IMR-90 (cell line): ENCODE measurements at regions of chr9 and their contacts with region 1.

Region 1: GRCh38 chr9:130451509-130452388 is 7.0 kb downstream of the ASS1 start:
- DNase-seq: peak; percentile 95
- ATAC-seq: peak; percentile 86
- H3K4me3 ChIP-seq: no peak overlapping the region
- H3K27ac ChIP-seq: no peak overlapping the region
- H3K4me1 ChIP-seq: peaks cover 26% of the 10 kb centered on the region
- H3K27me3 ChIP-seq: no peaks in the 10 kb centered on the region; the same call in 1 of the 2 replicates
- CTCF ChIP-seq: peak; percentile 45
- POLR2A ChIP-seq: no peak
- RAD21 ChIP-seq: peak; percentile 20; the same call in 1 of the 2 replicates

Region 2: GRCh38 chr9:130423272-130423671 is 28.5 kb before region 1 on chr9:
- CTCF ChIA-PET with region 1: no interaction called
- POLR2A ChIA-PET with region 1: interaction called, 11 read pairs
- dilution Hi-C with region 1: no loop called
- in situ Hi-C with region 1: no loop called
- intact Hi-C with region 1: no loop called
- DNase-seq: no peak
- ATAC-seq: no peak
- H3K4me3 ChIP-seq: no peak overlapping the region
- H3K27ac ChIP-seq: no peak overlapping the region
- H3K4me1 ChIP-seq: peaks cover 15% of the 10 kb centered on the region
- H3K27me3 ChIP-seq: peaks cover 6% of the 10 kb centered on the region
- CTCF ChIP-seq: no peak
- POLR2A ChIP-seq: no peak
- RAD21 ChIP-seq: no peak

Region 3: GRCh38 chr9:130693426-130694191 is 241.9 kb after region 1 on chr9 and contains the start of gene EXOSC2:
- CTCF ChIA-PET with region 1: no interaction called
- POLR2A ChIA-PET with region 1: no interaction called
- dilution Hi-C with region 1: no loop called
- in situ Hi-C with region 1: loop called (anchors 5 kb)
- intact Hi-C with region 1: no loop called
- DNase-seq: peak; percentile 98
- ATAC-seq: peak; percentile 92
- H3K4me3 ChIP-seq: peak within 1 kb of the TSS; percentile 66
- H3K27ac ChIP-seq: peak within 1 kb of the TSS; percentile 78
- H3K4me1 ChIP-seq: peaks cover 4% of the 10 kb centered on the region
- H3K27me3 ChIP-seq: no peaks in the 10 kb centered on the region
- CTCF ChIP-seq: no peak
- POLR2A ChIP-seq: peak; percentile 85
- RAD21 ChIP-seq: no peak
- total RNA-seq, gene EXOSC2: 47.5 and 48.6 TPM in 2 replicates